HEK293T (cell line): ENCODE measurements at regions of chr5 and their contacts with region 1.

Region 1: DNA sequence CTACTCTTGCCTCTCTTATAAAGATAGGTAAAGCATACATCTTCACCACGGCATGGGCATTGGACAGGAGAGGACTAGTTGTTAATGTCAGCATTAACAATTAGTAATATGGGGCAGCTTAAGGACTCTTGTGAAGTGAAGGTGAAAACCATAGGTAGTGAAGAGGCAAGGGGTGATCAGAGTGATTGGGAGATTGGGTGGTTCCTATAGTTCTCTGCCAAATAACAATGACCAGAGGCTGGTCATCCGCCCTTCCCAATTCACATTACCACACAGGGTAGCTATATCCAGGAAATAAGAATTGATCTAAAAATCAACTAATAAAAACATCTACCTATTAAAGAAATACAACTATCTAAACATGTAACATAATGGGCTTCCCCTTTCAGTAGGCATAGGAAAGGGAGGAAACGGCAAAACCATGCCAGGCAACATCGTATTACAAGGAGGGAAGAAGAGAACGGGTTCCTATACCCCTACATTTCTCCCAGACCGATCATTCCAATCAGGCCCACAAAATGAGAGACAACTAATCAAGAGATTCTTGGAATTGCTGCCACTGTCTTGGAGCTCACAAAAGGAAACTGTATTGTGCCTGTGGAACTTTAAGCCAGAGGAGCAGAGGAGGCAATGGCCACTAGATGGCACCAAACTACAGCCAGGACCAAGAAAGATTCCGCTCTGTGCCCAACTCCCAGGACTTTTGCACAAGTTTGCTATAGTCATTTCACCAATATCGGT is 121.6 kb downstream of the FBXL17 start:
- DNase-seq: peak; percentile 74

Region 2: GRCh38 chr5:108125771-108126511 is 134.3 kb before region 1 on chr5:
- CTCF ChIA-PET with region 1: no interaction called
- POLR2A ChIA-PET with region 1: no interaction called
- DNase-seq: no peak

Region 3: DNA sequence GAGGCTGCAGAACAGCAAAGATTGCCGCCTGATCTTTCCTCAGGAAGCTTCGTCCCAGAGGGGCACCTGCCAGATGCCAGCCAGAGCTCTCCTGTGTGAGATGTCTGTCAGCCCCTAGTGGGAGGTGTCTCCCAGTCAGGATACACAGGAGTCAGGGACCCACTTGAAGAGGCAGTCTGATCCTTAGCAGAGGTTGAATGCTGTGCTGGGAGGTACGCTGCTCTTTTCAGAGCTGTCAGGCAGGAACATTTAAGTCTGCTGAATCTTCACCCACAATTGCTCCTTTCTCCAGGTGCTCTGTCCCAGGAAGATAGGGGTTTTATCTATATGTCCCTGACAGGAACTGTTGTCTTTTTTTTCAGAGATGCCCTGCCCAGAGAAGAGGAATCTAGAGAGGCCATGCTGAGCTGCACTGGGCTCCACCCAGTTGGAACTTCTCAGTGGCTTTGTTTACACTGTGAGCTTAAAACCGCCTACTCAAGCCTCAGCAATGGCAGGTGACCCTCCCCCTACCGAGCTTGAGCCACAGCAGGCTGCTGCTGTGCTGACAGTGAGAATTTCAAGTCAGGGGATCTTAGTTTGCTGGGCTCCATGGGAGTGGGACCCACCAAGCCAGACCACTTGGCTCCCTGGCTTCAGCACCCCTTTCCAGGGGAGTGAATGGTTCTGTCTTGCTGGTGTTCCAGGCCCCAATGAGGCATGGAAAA is 47.5 kb before region 1 on chr5:
- CTCF ChIA-PET with region 1: no interaction called
- POLR2A ChIA-PET with region 1: no interaction called
- DNase-seq: no peak

Region 4: GRCh38 chr5:108315829-108316228 is 55.5 kb after region 1 on chr5:
- CTCF ChIA-PET with region 1: no interaction called
- POLR2A ChIA-PET with region 1: no interaction called
- DNase-seq: no peak

Region 5: GRCh38 chr5:108345541-108346171 is 85.4 kb after region 1 on chr5:
- CTCF ChIA-PET with region 1: interaction called, 20 read pairs
- POLR2A ChIA-PET with region 1: no interaction called
- DNase-seq: peak; percentile 13

Region 6: DNA sequence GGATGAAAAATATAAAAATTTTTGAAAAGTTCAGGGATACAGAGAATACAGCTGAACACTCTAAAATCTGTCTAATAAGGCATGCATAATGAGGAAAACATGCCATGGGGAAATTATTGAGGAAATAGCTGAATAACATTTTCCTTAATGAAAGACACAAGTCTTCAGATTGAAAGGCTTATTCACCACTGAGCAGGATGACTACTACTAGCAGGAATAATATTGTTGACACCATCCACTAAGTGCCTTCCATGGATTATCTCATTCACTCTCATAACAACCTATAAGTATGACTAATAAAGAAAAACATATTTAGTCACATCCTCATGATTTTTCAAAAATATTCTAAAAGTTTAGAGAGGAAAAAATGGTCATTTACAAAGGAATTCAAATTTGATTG is 390.7 kb after region 1 on chr5:
- CTCF ChIA-PET with region 1: no interaction called
- POLR2A ChIA-PET with region 1: no interaction called
- DNase-seq: no peak